K562 (cell line): ENCODE measurements at regions of chr11 and their contacts with region 1.

Region 1: DNA sequence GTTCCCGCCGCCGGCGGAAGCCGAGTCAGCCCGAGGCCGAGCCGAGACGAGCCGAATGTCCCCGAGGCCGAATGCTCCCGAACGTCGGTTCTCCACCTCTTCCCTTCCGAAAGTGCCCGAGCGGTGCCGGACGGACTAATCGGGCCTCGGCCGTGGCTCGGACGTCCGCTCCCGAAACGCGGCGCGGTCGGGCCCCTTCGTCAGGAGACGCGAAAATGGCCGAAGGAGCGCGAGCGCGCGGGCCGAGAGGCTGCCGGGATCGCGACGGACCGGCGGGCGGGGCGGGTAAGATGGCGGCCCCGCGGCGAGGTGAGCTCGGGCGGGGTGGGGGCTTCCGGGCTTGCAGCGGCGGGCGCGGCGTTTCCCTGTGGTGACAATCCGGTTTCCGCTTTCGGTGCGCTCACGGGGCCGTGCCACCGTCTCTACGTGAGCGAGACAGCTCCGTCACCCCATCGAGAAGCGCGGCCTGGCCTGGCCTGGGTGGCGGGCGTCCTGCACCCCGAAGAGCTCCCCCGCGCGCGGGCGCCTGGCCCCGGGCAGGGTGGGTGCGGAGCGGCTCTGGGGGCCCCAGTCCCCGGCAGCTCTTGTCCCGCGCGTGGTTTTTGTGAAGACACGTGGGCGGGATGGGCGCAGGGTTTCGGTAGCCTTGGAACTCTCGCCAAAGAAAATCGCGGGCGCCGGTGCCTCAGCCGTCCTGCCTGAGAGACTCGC is at the start of gene TMEM80:
- DNase-seq: peak; percentile 69 to 98 (median 82)
- ATAC-seq: peak; percentile 88
- H3K4me3 ChIP-seq: peak within 1 kb of the TSS; percentile 98
- H3K27ac ChIP-seq: peak within 1 kb of the TSS; percentile 96
- H3K4me1 ChIP-seq: peaks cover 37 to 67% of the 10 kb centered on the region in 2 experiments
- H3K27me3 ChIP-seq: no peaks in the 10 kb centered on the region
- CTCF ChIP-seq: no peak
- EP300 ChIP-seq: no peak
- POLR2A ChIP-seq: peak; percentile 89
- RAD21 ChIP-seq: no peak
- polyA plus RNA-seq, gene TMEM80: 5.1 to 6.3 TPM

Region 2: GRCh38 chr11:554824-555472 is 140.7 kb before region 1 on chr11:
- CTCF ChIA-PET with region 1: no interaction called
- POLR2A ChIA-PET with region 1: no interaction called
- in situ Hi-C with region 1: no loop called
- intact Hi-C with region 1: loop called (anchors 10 kb)
- DNase-seq: peak; percentile 79 to 90 (median 82)
- ATAC-seq: peak; percentile 81
- H3K4me3 ChIP-seq: peak overlapping the region; percentile 27
- H3K27ac ChIP-seq: peak overlapping the region; percentile 56
- H3K4me1 ChIP-seq: peaks cover 23 to 99% of the 10 kb centered on the region in 2 experiments
- H3K27me3 ChIP-seq: no peaks in the 10 kb centered on the region
- CTCF ChIP-seq: peak in 2 of 3 experiments; percentile 62 to 74; a peak in 5 of 6 replicates
- EP300 ChIP-seq: no peak
- POLR2A ChIP-seq: no peak
- RAD21 ChIP-seq: peak in 1 of 2 experiments; percentile 49; a peak in 2 of 4 replicates

Region 3: DNA sequence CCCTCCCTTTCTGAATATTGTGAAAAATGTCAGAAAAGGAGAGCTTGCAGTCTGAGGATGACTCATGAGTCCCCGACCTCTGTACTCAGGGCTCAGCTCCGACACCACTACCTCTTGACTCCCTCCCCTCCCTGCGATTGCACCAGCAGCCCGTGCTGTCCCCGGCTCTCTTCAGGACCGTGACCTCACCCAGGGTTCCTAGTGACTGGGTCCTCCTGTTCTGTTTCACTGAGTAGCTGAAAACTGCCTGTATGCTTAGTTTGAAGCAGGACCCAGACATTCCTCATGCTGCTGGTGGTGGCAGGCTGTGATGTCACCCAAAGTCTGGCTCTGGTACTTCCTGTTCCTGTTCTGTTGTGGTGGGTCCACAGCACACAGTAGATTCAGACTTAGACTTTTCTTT is 107.7 kb before region 1 on chr11:
- CTCF ChIA-PET with region 1: no interaction called
- POLR2A ChIA-PET with region 1: no interaction called
- in situ Hi-C with region 1: no loop called
- intact Hi-C with region 1: no loop called
- DNase-seq: peak; percentile 57 to 79 (median 73)
- ATAC-seq: peak; percentile 96
- H3K4me3 ChIP-seq: no peak overlapping the region
- H3K27ac ChIP-seq: peak overlapping the region; percentile 80; the same call in 2 of the 3 replicates
- H3K4me1 ChIP-seq: peaks cover 3 to 26% of the 10 kb centered on the region in 2 experiments; a peak in 4 of 5 replicates
- H3K27me3 ChIP-seq: no peaks in the 10 kb centered on the region
- CTCF ChIP-seq: no peak
- EP300 ChIP-seq: no peak
- POLR2A ChIP-seq: no peak
- RAD21 ChIP-seq: no peak

Region 4: GRCh38 chr11:674406-674805 is 21.3 kb before region 1 on chr11:
- CTCF ChIA-PET with region 1: no interaction called
- POLR2A ChIA-PET with region 1: interaction called, 12 read pairs
- in situ Hi-C with region 1: no loop called
- intact Hi-C with region 1: no loop called
- DNase-seq: no peak
- ATAC-seq: no peak
- H3K4me3 ChIP-seq: no peak overlapping the region
- H3K27ac ChIP-seq: no peak overlapping the region
- H3K4me1 ChIP-seq: peaks cover 0 to 2% of the 10 kb centered on the region in 2 experiments; a peak in 1 of 5 replicates
- H3K27me3 ChIP-seq: no peaks in the 10 kb centered on the region
- CTCF ChIP-seq: no peak
- EP300 ChIP-seq: no peak
- POLR2A ChIP-seq: no peak
- RAD21 ChIP-seq: no peak

Region 5: GRCh38 chr11:680476-680875 is 15.2 kb before region 1 on chr11:
- CTCF ChIA-PET with region 1: no interaction called
- POLR2A ChIA-PET with region 1: interaction called, 19 read pairs
- in situ Hi-C with region 1: no loop called
- intact Hi-C with region 1: no loop called
- DNase-seq: no peak
- ATAC-seq: no peak
- H3K4me3 ChIP-seq: no peak overlapping the region
- H3K27ac ChIP-seq: no peak overlapping the region
- H3K4me1 ChIP-seq: peaks cover 0 to 5% of the 10 kb centered on the region in 2 experiments; a peak in 1 of 5 replicates
- H3K27me3 ChIP-seq: no peaks in the 10 kb centered on the region
- CTCF ChIP-seq: no peak
- EP300 ChIP-seq: no peak
- POLR2A ChIP-seq: no peak
- RAD21 ChIP-seq: no peak